CD8-positive, alpha-beta T cell (primary cell): ENCODE measurements at regions of chr7 and their contacts with region 1.

Region 1: DNA sequence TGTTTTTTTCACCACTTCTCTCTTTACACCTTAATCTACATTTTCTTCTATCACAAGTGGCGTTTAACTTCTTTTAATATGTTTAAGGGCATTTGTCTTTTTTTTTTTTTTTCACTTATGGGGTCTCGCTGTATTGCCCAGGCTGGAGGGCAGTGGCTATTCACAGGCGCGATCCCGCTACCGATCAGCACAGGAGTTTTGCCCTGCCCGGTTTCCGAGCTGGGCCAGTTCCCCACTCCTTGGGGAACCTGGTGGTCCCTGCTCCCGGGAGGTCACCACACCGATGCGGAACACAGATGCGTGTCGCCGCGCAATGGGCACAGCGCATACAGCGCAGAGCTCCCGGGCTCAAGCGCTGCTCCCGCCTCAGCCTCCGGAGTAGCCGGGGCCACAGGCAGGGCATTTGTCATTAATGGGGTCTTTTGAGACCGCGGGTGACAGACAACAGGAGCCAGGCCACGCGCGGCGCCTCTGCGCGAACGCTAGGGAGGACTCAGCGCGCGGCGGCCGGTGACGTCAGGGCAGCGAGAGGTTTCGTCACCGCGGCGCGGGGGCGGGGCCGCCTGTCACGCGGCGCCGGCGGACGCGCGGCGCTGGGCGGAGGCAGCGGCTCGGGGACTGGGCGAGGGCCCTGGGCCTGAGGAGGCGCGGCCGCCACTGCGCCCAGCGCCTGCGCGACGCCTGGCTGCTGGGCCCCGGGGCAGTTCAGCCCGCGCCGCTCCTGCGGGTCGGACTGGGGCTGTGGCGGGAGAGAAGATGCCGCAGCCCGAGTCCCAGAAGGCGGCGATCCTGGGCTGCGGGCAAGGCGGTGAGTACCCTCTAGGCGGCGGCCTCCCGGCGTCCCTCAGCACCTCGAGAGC is at the start of gene GALNT11:
- DNase-seq: peak; percentile 76 to 95 (median 89)
- ATAC-seq: peak; percentile 78
- H3K4me3 ChIP-seq: peak within 1 kb of the TSS; percentile 66 to 81
- H3K4me3 Mint-ChIP-seq: peak within 1 kb of the TSS; percentile 87
- H3K27ac ChIP-seq: peak within 1 kb of the TSS; percentile 80 to 85
- H3K27ac Mint-ChIP-seq: peak within 1 kb of the TSS; percentile 95
- H3K4me1 ChIP-seq: peaks cover 37% of the 10 kb centered on the region
- H3K4me1 Mint-ChIP-seq: peaks cover 45% of the 10 kb centered on the region
- H3K27me3 ChIP-seq: no peaks in the 10 kb centered on the region
- H3K27me3 Mint-ChIP-seq: no peaks in the 10 kb centered on the region
- CTCF ChIP-seq: peak; percentile 17
- total RNA-seq, gene GALNT11: 43.1 to 44.5 TPM

Region 2: GRCh38 chr7:151341357-151342101 is 683.8 kb before region 1 on chr7 and contains the start of gene NUB1:
- CTCF ChIA-PET with region 1: no interaction called
- POLR2A ChIA-PET with region 1: no interaction called
- intact Hi-C with region 1: loop called in 1 of 2 experiments (anchors 10 kb)
- DNase-seq: peak; percentile 83 to 98 (median 92)
- ATAC-seq: peak; percentile 91
- H3K4me3 ChIP-seq: peak within 1 kb of the TSS; percentile 68 to 82
- H3K4me3 Mint-ChIP-seq: peak within 1 kb of the TSS; percentile 88
- H3K27ac ChIP-seq: peak within 1 kb of the TSS; percentile 72 to 75
- H3K27ac Mint-ChIP-seq: peak within 1 kb of the TSS; percentile 92
- H3K4me1 ChIP-seq: peaks cover 23% of the 10 kb centered on the region
- H3K4me1 Mint-ChIP-seq: peaks cover 35% of the 10 kb centered on the region
- H3K27me3 ChIP-seq: no peaks in the 10 kb centered on the region
- H3K27me3 Mint-ChIP-seq: no peaks in the 10 kb centered on the region
- CTCF ChIP-seq: no peak
- total RNA-seq, gene NUB1: 78.4 to 81.2 TPM

Region 3: DNA sequence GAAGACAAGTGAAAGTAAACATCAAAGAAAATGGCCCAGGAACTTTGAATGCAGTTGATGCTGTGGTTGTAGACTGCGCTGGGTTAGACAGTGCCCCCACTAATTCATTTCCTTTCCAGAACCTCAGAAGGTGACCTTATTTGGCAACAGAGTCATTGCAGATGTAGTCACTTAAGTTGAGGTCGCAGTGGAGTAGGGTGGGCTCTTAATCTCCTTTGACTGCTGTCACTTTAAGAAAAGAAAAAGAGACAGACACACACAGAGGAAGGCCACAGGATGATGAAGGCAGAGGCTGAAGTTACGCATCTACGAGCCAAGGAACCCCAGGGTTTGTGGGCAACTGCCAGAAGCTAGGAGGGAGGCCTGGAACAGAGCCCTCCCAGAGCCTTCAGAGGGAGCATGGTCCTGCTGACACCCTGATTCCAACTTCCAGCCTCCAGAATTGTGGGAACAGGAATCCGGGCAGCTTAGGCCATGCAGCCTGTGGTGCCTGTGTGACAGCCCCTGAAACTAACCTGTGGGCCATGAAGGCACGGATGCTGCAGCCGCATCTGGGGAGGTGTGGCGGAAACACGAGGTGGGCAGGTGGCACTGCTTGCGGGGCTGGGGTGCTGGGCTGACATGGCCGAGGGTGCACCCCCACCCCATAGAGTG is 256.0 kb before region 1 on chr7:
- CTCF ChIA-PET with region 1: no interaction called
- POLR2A ChIA-PET with region 1: no interaction called
- intact Hi-C with region 1: loop called in 1 of 2 experiments (anchors 5 kb)
- DNase-seq: peak in 8 of 9 experiments; percentile 21 to 90 (median 62)
- ATAC-seq: peak; percentile 93
- H3K4me3 ChIP-seq: peak overlapping the region; percentile 42 to 51
- H3K4me3 Mint-ChIP-seq: peak overlapping the region; percentile 77
- H3K27ac ChIP-seq: peak overlapping the region; percentile 63 to 78
- H3K27ac Mint-ChIP-seq: peak overlapping the region; percentile 96
- H3K4me1 ChIP-seq: peaks cover 67% of the 10 kb centered on the region
- H3K4me1 Mint-ChIP-seq: peaks cover 74% of the 10 kb centered on the region
- H3K27me3 ChIP-seq: no peaks in the 10 kb centered on the region
- H3K27me3 Mint-ChIP-seq: no peaks in the 10 kb centered on the region
- CTCF ChIP-seq: no peak

Region 4: GRCh38 chr7:152046531-152046930 is 21.2 kb after region 1 on chr7:
- CTCF ChIA-PET with region 1: no interaction called
- POLR2A ChIA-PET with region 1: no interaction called
- intact Hi-C with region 1: no loop called
- DNase-seq: no peak
- ATAC-seq: no peak
- H3K4me3 ChIP-seq: no peak overlapping the region
- H3K4me3 Mint-ChIP-seq: no peak overlapping the region
- H3K27ac ChIP-seq: no peak overlapping the region
- H3K27ac Mint-ChIP-seq: no peak overlapping the region
- H3K4me1 ChIP-seq: no peaks in the 10 kb centered on the region
- H3K4me1 Mint-ChIP-seq: peaks cover 41% of the 10 kb centered on the region
- H3K27me3 ChIP-seq: no peaks in the 10 kb centered on the region
- H3K27me3 Mint-ChIP-seq: no peaks in the 10 kb centered on the region
- CTCF ChIP-seq: no peak

Region 5: GRCh38 chr7:152108359-152108758 is 83.1 kb after region 1 on chr7:
- CTCF ChIA-PET with region 1: interaction called, 3 read pairs
- POLR2A ChIA-PET with region 1: no interaction called
- intact Hi-C with region 1: loop called in 1 of 2 experiments (anchors 10 kb)
- DNase-seq: no peak
- ATAC-seq: no peak
- H3K4me3 ChIP-seq: no peak overlapping the region
- H3K4me3 Mint-ChIP-seq: no peak overlapping the region
- H3K27ac ChIP-seq: no peak overlapping the region
- H3K27ac Mint-ChIP-seq: no peak overlapping the region
- H3K4me1 ChIP-seq: no peaks in the 10 kb centered on the region
- H3K4me1 Mint-ChIP-seq: peaks cover 2% of the 10 kb centered on the region
- H3K27me3 ChIP-seq: no peaks in the 10 kb centered on the region
- H3K27me3 Mint-ChIP-seq: no peaks in the 10 kb centered on the region
- CTCF ChIP-seq: no peak

Region 6: DNA sequence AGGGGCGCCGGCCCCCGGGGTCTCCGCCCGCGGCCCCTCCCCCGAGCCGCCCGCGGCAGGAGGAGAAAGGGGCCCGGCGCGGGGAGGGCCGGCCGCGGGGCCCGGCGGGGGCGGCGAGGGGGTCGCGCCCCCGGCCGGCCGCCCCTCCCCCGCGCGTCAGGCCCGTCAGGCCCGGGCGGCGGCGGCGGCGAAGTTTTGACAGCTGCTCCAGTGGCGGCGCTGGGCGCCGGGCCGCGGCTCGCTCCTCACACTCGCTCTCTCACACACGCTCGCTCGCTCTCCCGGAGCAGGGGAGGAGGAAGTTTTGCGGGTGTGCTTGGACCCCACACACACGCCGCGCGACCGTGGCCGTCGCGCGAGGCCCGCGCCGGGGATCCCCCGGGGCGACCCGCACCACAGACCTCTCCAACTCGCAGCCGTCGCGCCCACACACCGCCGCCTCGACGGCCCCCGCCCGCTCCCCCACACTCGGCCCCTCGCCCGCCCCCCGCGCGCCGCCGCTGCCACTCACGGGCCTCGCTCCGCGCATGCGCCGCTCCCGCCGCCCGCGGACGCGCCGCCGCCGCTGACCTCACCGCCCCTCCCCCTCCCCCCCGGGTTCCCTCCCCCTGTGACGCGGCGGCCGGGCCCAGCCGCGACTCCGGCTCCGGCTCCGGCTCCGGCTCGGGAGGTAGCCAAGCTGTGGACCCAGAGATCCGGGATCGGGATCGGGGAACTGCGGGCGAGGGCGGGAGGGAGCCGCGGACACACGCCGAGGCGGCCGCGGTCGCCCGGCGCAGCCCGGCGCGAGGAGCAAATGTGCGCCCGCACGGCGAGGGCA is 411.0 kb after region 1 on chr7:
- CTCF ChIA-PET with region 1: no interaction called
- POLR2A ChIA-PET with region 1: no interaction called
- intact Hi-C with region 1: loop called in 1 of 2 experiments (anchors 10 kb)
- DNase-seq: peak; percentile 84 to 95 (median 90)
- ATAC-seq: peak; percentile 73
- H3K4me3 ChIP-seq: peak overlapping the region; percentile 59 to 79
- H3K4me3 Mint-ChIP-seq: peak overlapping the region; percentile 88
- H3K27ac ChIP-seq: peak overlapping the region; percentile 86 to 93
- H3K27ac Mint-ChIP-seq: peak overlapping the region; percentile 96
- H3K4me1 ChIP-seq: peaks cover 16% of the 10 kb centered on the region
- H3K4me1 Mint-ChIP-seq: peaks cover 31% of the 10 kb centered on the region
- H3K27me3 ChIP-seq: no peaks in the 10 kb centered on the region
- H3K27me3 Mint-ChIP-seq: no peaks in the 10 kb centered on the region
- CTCF ChIP-seq: no peak